Activated naive CD4-positive, alpha-beta T cell treated with anti-CD3 and anti-CD28 coated beads for 36 hours (primary cell): ENCODE measurements at regions of chr3 and their contacts with region 1.

Region 1: DNA sequence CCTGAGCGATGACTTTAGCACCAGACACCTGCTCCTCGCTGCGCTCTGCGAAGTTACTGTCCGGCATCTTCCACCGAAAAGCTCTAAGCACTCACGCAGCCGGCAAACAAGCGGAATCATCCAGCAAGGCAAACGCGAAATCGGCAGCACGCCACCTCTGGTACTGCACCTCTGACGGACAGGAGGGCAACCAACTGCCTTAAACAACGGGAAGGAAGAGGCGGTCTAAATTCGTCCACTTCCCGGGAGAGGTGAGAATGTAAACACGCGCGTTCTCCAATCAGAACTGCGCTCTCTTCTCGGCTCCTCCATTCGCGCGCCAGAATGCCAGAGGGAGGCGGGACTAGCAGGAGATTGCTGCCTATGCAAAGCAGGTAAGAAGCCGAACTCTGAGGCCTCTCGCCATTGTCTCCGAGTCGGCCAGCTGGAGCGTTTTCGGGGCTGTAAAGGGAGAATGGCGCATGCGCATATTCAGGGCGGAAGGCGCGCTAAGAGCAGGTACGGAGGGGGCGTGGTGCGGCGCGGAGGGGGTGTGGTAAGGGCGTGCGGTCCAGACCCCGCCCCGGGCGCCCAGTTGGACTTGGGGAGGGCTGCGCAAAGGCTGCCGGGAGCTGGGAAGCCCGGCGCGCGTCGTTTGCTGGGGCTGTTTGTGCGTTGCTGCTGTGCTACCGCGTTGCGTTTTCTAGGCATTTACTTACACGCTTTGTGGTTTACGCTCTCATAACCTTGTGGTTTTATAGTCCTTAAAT is at the starts of genes BTD and HACL1:
- DNase-seq: peak; percentile 99
- H3K4me3 Mint-ChIP-seq: peak within 1 kb of the TSS; percentile 99
- H3K27ac Mint-ChIP-seq: peak within 1 kb of the TSS; percentile 96
- H3K4me1 Mint-ChIP-seq: peaks cover 46% of the 10 kb centered on the region
- H3K27me3 Mint-ChIP-seq: no peaks in the 10 kb centered on the region
- total RNA-seq, gene BTD: 8.7 to 9.7 TPM
- total RNA-seq, gene HACL1: 25.3 to 26.5 TPM

Region 2: GRCh38 chr3:15309662-15310335 is 291.8 kb before region 1 on chr3:
- CTCF ChIA-PET with region 1: no interaction called
- intact Hi-C with region 1: loop called (anchors 5 kb)
- DNase-seq: peak; percentile 76
- H3K4me3 Mint-ChIP-seq: no peak overlapping the region
- H3K27ac Mint-ChIP-seq: peak overlapping the region; percentile 95
- H3K4me1 Mint-ChIP-seq: peaks cover 66% of the 10 kb centered on the region
- H3K27me3 Mint-ChIP-seq: no peaks in the 10 kb centered on the region

Region 3: GRCh38 chr3:15623535-15624440 is 22.2 kb after region 1 on chr3:
- CTCF ChIA-PET with region 1: no interaction called
- intact Hi-C with region 1: loop called (anchors 1 kb)
- DNase-seq: peak; percentile 40
- H3K4me3 Mint-ChIP-seq: peak overlapping the region; percentile 75
- H3K27ac Mint-ChIP-seq: peak overlapping the region; percentile 94
- H3K4me1 Mint-ChIP-seq: peaks cover 35% of the 10 kb centered on the region
- H3K27me3 Mint-ChIP-seq: no peaks in the 10 kb centered on the region

Region 4: DNA sequence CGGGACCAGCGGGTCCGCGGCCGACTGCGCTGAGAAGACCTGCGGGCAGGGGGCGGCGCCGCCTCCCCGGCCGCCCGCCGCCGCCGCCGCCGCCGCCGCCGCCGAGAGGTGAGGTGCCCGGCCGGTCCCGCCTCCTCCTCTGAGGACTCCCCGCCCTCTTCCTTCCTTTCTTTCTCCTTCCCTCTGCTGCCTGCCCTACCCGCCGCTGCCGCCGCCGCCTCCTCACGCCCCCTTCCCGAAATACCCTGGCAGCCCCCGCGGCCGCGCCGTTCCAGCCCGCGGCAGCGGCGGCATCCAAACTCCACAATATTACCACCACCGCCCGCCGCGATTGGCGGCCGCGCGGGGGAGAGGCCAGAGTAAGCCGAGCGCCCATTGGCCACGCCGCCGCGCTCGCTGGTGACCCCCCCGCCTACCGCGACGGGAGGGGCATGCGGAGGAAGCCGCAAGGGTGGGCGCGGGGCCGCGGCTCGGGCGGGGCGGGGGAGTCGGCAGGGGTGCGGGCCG is 258.0 kb after region 1 on chr3:
- CTCF ChIA-PET with region 1: no interaction called
- intact Hi-C with region 1: loop called (anchors 1 kb)
- DNase-seq: peak; percentile 75
- H3K4me3 Mint-ChIP-seq: peak overlapping the region; percentile 98
- H3K27ac Mint-ChIP-seq: peak overlapping the region; percentile 91
- H3K4me1 Mint-ChIP-seq: peaks cover 40% of the 10 kb centered on the region
- H3K27me3 Mint-ChIP-seq: no peaks in the 10 kb centered on the region